Common myeloid progenitor, CD34-positive (primary cell): ENCODE measurements at regions of chr4 and their contacts with region 1.

Region 1: GRCh38 chr4:8607603-8608481 is 15.3 kb downstream of the CPZ start:
- DNase-seq: peak; percentile 12 to 37 (median 32)
- H3K4me3 ChIP-seq: no peak overlapping the region
- H3K27ac ChIP-seq: no peak overlapping the region
- H3K4me1 ChIP-seq: peaks cover 0 to 2% (median 0%) of the 10 kb centered on the region in 4 experiments
- H3K27me3 ChIP-seq: peaks cover 0 to 44% (median 4%) of the 10 kb centered on the region in 5 experiments

Region 2: DNA sequence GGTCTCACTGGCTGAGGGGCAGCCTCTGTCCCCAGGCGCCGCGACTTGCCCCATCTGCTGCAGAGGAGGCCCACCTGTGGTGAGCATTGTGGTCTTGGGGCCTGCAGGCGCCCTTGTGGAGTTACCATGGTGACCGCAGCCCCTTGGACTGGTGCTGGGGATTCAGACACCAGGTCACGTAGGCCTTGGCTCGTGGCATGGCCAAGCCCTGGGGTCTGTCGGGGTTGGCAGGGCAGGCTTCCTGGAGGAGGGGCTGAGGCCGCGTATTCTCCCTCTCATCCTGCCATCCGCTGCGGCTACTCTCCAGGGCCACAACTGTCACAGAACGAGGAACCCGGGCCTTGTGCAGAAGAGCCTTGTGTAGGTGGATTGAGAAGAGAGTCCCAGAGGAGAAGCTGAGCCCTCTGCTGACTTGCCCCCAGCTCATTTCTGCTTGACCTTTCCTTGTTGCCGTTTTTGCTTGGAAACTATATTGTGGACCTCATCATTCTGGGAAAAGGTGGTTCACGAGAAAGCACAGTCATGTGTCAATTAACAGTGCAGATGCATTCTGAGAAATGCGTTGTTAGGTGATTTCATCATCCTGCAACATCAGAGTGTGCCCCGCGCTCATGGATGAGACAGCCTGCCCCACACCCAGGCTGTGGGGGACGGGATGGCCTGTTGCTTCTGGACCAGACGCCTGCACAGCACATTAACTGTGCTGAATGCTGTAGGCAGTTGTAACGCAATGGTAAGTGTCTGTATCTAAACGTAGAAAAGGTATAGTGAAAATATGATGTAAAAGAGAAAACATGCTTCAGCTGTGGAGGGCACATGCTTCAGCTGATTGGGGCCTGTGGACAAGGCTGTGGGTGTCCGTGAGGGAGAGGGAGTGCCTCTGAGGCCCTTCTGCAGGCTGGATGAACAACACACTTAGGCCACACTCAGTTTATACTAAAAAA is 128.8 kb before region 1 on chr4:
- CTCF ChIA-PET with region 1: no interaction called
- POLR2A ChIA-PET with region 1: no interaction called
- DNase-seq: no peak
- H3K4me3 ChIP-seq: no peak overlapping the region
- H3K27ac ChIP-seq: no peak overlapping the region
- H3K4me1 ChIP-seq: no peaks in the 10 kb centered on the region
- H3K27me3 ChIP-seq: no peaks in the 10 kb centered on the region

Region 3: GRCh38 chr4:8597319-8597718 is 10.5 kb before region 1 on chr4:
- CTCF ChIA-PET with region 1: interaction called, 13 read pairs
- POLR2A ChIA-PET with region 1: no interaction called
- DNase-seq: no peak
- H3K4me3 ChIP-seq: no peak overlapping the region
- H3K27ac ChIP-seq: no peak overlapping the region
- H3K4me1 ChIP-seq: no peaks in the 10 kb centered on the region
- H3K27me3 ChIP-seq: peaks cover 0 to 30% (median 12%) of the 10 kb centered on the region in 5 experiments